ENCODE measurements at regions of chr5 and their contacts with region 1.

Region 1: GRCh38 chr5:96548947-96549346 is 113.2 kb upstream of the CAST start:
- DNase-seq: no peak
- ATAC-seq: no peak
- H3K4me3 ChIP-seq: no peak overlapping the region
- H3K4me3 Mint-ChIP-seq: no peak overlapping the region
- H3K27ac ChIP-seq: no peak overlapping the region
- H3K27ac Mint-ChIP-seq: no peak overlapping the region
- H3K4me1 ChIP-seq: no peaks in the 10 kb centered on the region
- H3K4me1 Mint-ChIP-seq: peaks cover 0 to 2% (median 0%) of the 10 kb centered on the region in 7 donors
- H3K27me3 ChIP-seq: no peaks in the 10 kb centered on the region
- H3K27me3 Mint-ChIP-seq: peaks cover 0 to 29% (median 6%) of the 10 kb centered on the region in 5 donors

Region 2: DNA sequence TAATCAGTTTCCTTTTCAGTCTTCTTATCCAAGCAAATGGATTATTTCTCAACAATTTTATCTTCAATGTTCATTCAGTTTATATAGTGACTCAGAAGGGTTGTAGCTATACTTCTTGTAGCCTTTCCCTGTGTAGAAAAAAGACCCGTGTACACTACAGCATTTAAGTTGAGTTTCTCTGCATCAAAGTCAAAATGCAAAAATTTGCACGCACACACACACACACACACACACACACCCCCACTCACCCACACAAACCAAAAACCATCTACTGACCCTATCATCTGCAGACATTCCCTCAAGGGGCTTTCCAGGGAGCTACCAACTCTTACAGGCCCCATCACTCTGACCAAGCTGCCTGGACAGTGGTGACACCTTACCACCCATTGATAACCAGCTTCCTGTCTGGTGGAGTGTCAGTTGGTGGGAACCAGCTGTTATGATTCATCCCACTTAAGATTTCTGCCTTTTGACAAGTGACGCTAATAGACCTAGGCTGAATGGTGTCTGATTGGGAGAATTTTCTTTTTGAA is 575.1 kb before region 1 on chr5:
- CTCF ChIA-PET with region 1: no interaction called
- POLR2A ChIA-PET with region 1: no interaction called
- intact Hi-C with region 1: no loop called
- DNase-seq: peak in 1 of 9 donors; percentile 22
- ATAC-seq: peak; percentile 87
- H3K4me3 ChIP-seq: no peak overlapping the region
- H3K4me3 Mint-ChIP-seq: no peak overlapping the region
- H3K27ac ChIP-seq: no peak overlapping the region
- H3K27ac Mint-ChIP-seq: peak overlapping the region in 1 of 9 donors; percentile 72
- H3K4me1 ChIP-seq: no peaks in the 10 kb centered on the region
- H3K4me1 Mint-ChIP-seq: peaks cover 0 to 5% (median 0%) of the 10 kb centered on the region in 7 donors
- H3K27me3 ChIP-seq: no peaks in the 10 kb centered on the region
- H3K27me3 Mint-ChIP-seq: peaks cover 0 to 19% (median 9%) of the 10 kb centered on the region in 5 donors

Region 3: DNA sequence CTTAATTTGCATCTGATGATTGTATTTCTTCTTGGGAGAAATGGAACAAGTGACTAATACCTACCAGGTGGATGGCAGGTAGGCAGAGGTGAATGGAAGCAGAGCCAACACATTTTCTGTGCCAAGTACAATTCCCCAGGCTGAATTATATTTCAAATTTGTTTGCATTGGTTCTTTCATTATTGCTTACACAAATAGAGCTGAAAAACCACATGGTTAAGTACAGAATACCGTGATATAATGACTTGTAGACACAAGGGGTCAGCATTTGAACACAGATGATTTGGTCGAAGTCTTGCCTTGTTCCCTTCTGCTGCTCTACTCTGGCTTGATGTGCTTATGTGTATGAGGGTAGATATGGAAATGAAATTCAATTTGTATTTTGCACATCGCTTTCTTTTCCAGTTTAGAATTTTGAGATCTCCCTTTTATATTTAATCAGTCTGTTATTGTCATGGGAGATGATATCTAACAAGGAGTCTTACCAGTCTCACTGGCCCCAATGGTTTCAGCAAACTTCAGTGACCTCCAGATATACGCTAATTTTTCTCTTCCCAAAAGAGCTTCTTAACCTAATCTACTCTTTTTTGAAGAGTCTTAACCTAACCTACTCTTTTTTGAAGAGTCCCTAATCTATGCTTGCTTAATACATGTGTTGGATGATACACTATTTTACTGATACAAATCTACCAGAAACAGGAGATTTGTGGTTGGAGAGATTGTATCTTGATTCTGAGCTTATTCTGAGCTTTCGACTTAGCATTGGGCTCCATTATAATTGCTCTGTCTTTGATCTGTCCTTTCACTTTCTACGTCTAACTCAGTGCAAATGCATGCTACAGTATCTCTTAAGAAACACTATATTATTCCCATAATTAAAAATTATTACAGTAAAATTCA is 204.0 kb before region 1 on chr5:
- CTCF ChIA-PET with region 1: interaction called, 9 read pairs
- POLR2A ChIA-PET with region 1: no interaction called
- intact Hi-C with region 1: loop called in 1 of 2 experiments (anchors 1 kb)
- DNase-seq: peak in 7 of 9 donors; percentile 33 to 70 (median 59)
- ATAC-seq: peak; percentile 91
- H3K4me3 ChIP-seq: no peak overlapping the region
- H3K4me3 Mint-ChIP-seq: peak overlapping the region; percentile 1 to 72 (median 48)
- H3K27ac ChIP-seq: no peak overlapping the region
- H3K27ac Mint-ChIP-seq: peak overlapping the region in 6 of 9 donors; percentile 3 to 53 (median 10)
- H3K4me1 ChIP-seq: peaks cover 6 to 7% of the 10 kb centered on the region in 2 donors
- H3K4me1 Mint-ChIP-seq: peaks cover 5 to 21% (median 18%) of the 10 kb centered on the region in 7 donors
- H3K27me3 ChIP-seq: no peaks in the 10 kb centered on the region
- H3K27me3 Mint-ChIP-seq: peaks cover 0 to 38% (median 8%) of the 10 kb centered on the region in 5 donors